Activated naive CD4-positive, alpha-beta T cell treated with anti-CD3 and anti-CD28 coated beads, Interleukin-2, amount 10 ng/mL, durations not matched to agents 7 days and 5 days (primary cell): ENCODE measurements at regions of chr16 and their contacts with region 1.

Region 1: DNA sequence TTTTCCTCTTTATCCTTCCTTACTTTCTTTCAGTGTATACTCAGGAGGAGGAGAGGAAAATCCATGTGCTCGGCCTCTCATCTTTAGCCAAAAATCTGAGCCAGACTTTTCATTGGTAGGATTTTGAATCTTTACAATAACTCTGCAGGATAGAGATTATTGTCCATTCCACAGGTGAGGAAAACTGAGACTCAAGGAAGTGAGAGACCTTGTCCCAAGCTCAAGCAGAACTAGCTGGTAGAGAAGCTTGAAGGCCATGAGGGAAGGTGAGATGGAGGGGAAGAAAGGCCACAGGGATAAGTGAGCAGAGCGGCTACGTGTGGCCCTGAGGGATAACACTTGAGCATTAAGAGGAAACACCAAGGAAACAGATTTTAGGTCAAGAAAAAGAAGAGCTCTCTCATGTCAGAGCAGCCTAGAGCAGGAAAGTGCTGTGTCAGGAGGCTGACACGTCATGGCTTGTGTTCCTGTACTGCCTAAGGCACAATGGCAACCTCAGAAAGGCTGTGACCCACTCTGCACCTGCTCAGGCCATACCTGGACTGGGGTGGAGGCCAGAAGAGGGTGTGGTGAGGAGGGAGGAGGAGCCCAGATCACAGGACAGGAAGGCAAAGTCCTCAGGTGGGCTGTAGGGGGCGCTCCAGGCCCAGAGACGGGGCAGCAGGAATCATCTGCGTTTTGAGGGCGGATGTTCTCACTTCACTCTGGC is 11.9 kb downstream of the MT4 start:
- DNase-seq: peak; percentile 91
- H3K4me3 Mint-ChIP-seq: no peak overlapping the region
- H3K27ac Mint-ChIP-seq: no peak overlapping the region
- H3K4me1 Mint-ChIP-seq: peaks cover 7% of the 10 kb centered on the region
- H3K27me3 Mint-ChIP-seq: peaks cover 33% of the 10 kb centered on the region

Region 2: GRCh38 chr16:56513972-56514371 is 62.8 kb before region 1 on chr16:
- CTCF ChIA-PET with region 1: interaction called, 11 read pairs
- DNase-seq: peak; percentile 70
- H3K4me3 Mint-ChIP-seq: no peak overlapping the region
- H3K27ac Mint-ChIP-seq: no peak overlapping the region
- H3K4me1 Mint-ChIP-seq: peaks cover 6% of the 10 kb centered on the region
- H3K27me3 Mint-ChIP-seq: no peaks in the 10 kb centered on the region

Region 3: DNA sequence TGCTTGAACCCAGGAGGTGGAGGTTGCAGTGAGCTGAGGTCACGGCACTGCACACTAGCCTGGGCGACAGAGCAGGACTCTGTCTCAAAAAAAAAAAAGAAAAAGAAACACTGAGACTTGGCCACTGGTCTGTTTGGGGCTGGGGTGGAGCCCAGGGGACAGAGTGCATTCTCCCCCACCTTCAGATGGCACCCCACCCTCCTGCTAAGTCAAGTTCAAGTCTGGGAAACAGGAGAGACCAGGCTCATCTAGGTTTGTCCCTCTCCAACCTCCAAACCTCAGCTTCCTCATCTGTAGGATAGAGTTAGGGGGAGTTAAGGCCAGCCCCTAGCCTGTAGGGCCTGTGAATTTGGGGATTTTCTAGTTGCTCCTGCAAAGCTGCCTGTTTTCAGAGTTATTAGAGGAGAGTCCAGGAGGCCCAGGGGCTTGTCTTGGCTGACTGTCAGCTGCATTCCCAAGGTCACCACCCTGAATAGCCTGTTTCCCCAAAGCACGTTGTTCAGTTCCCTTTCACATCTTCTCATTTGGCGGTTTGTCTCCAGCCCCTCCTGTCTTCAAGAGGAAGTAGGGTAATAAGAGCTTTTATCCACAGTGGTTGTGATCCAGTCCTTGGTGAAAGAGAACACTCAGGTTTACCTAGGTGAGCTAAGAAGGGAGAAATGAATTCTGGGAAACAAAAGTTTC is 14.8 kb after region 1 on chr16:
- CTCF ChIA-PET with region 1: interaction called, 11 read pairs
- DNase-seq: no peak
- H3K4me3 Mint-ChIP-seq: no peak overlapping the region
- H3K27ac Mint-ChIP-seq: no peak overlapping the region
- H3K4me1 Mint-ChIP-seq: peaks cover 15% of the 10 kb centered on the region
- H3K27me3 Mint-ChIP-seq: peaks cover 73% of the 10 kb centered on the region

Region 4: GRCh38 chr16:56600398-56600999 is 23.8 kb after region 1 on chr16:
- CTCF ChIA-PET with region 1: interaction called, 20 read pairs
- DNase-seq: peak; percentile 55
- H3K4me3 Mint-ChIP-seq: no peak overlapping the region
- H3K27ac Mint-ChIP-seq: no peak overlapping the region
- H3K4me1 Mint-ChIP-seq: peaks cover 8% of the 10 kb centered on the region
- H3K27me3 Mint-ChIP-seq: peaks cover 54% of the 10 kb centered on the region